Transverse colon (tissue), 4 donors: ENCODE measurements at regions of chr16 and their contacts with region 1.

Region 1: GRCh38 chr16:23060458-23061320 is 88.6 kb downstream of the USP31 start:
- DNase-seq: peak; percentile 72
- H3K4me3 ChIP-seq: no peak overlapping the region
- H3K27ac ChIP-seq: no peak overlapping the region
- H3K4me1 ChIP-seq: no peaks in the 10 kb centered on the region
- H3K27me3 ChIP-seq: no peaks in the 10 kb centered on the region
- CTCF ChIP-seq: peak; percentile 65 to 84 (median 79)
- EP300 ChIP-seq: no peak
- POLR2A ChIP-seq: no peak

Region 2: GRCh38 chr16:22763437-22764080 is 297.1 kb before region 1 on chr16:
- in situ Hi-C with region 1: no loop called
- intact Hi-C with region 1: no loop called
- DNase-seq: no peak
- H3K4me3 ChIP-seq: no peak overlapping the region
- H3K27ac ChIP-seq: peak overlapping the region in 3 of 4 donors; percentile 58 to 68 (median 62)
- H3K4me1 ChIP-seq: peaks cover 0 to 10% (median 9%) of the 10 kb centered on the region in 4 donors
- H3K27me3 ChIP-seq: no peaks in the 10 kb centered on the region
- CTCF ChIP-seq: no peak
- EP300 ChIP-seq: no peak
- POLR2A ChIP-seq: no peak

Region 3: GRCh38 chr16:22901563-22901962 is 159.1 kb before region 1 on chr16:
- in situ Hi-C with region 1: loop called in 1 of 4 experiments (anchors 10 kb)
- intact Hi-C with region 1: no loop called
- DNase-seq: no peak
- H3K4me3 ChIP-seq: no peak overlapping the region
- H3K27ac ChIP-seq: no peak overlapping the region
- H3K4me1 ChIP-seq: peaks cover 0 to 9% (median 0%) of the 10 kb centered on the region in 4 donors
- H3K27me3 ChIP-seq: peaks cover 33% of the 10 kb centered on the region
- CTCF ChIP-seq: no peak
- EP300 ChIP-seq: no peak
- POLR2A ChIP-seq: no peak

Region 4: GRCh38 chr16:22970209-22970865 is 90.4 kb before region 1 on chr16:
- in situ Hi-C with region 1: loop called in 1 of 4 experiments (anchors 25 kb)
- intact Hi-C with region 1: no loop called
- DNase-seq: no peak
- H3K4me3 ChIP-seq: no peak overlapping the region
- H3K27ac ChIP-seq: no peak overlapping the region
- H3K4me1 ChIP-seq: no peaks in the 10 kb centered on the region
- H3K27me3 ChIP-seq: no peaks in the 10 kb centered on the region
- CTCF ChIP-seq: no peak
- EP300 ChIP-seq: no peak
- POLR2A ChIP-seq: no peak

Region 5: DNA sequence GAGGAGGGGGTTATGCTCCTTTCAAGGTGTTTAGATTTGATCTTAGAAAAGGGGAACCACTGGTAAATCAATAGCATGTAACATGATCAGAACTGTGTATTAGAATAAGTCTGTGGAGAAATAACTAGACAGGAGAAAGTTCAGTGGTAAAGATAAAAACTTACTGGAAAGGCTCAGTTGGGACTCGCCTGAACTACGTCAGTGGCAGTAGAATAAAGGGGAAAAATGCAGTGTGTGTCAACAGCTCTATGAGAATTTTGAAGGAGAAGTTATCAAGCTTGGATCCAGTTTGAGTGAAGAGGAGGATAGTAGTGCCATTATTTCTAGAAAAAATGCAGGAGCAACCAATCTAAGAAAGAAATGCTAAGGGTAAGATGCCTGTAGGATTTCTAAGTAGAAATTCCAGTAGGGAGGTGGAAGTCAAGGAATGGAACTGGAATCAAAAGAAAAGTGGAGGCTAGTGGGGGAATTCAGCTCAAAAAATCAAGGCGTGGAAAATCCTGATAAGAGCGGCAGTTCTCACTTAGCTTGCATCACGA is 40.4 kb after region 1 on chr16:
- in situ Hi-C with region 1: no loop called
- intact Hi-C with region 1: no loop called
- DNase-seq: no peak
- H3K4me3 ChIP-seq: no peak overlapping the region
- H3K27ac ChIP-seq: no peak overlapping the region
- H3K4me1 ChIP-seq: peaks cover 0 to 22% (median 13%) of the 10 kb centered on the region in 4 donors
- H3K27me3 ChIP-seq: no peaks in the 10 kb centered on the region
- CTCF ChIP-seq: no peak
- EP300 ChIP-seq: no peak
- POLR2A ChIP-seq: no peak